Thyroid gland (tissue), 4 donors: ENCODE measurements at regions of chr1 and their contacts with region 1.

Region 1: GRCh38 chr1:239396995-239397394 is 10.6 kb downstream of the CHRM3 start:
- DNase-seq: no peak
- H3K4me3 ChIP-seq: no peak overlapping the region
- H3K27ac ChIP-seq: no peak overlapping the region
- H3K4me1 ChIP-seq: no peaks in the 10 kb centered on the region
- H3K27me3 ChIP-seq: no peaks in the 10 kb centered on the region
- CTCF ChIP-seq: no peak
- POLR2A ChIP-seq: no peak

Region 2: DNA sequence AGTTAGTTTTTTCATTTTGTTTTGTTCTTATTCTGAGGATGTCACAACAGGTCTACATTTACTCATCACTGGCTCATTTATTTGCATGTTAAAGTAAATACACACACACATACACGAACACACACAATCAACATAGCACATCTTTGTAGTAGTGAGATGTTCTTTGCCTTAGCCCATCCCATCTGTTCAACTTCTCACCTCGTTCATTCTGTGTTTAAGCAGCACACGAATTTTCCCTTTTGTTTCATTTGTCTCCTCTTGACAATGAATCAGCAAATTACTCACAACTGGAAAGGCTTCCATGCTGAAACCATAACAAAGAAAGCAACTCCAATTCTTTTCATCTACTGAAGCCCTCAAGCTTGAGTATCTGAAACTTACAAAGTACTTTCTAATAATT is 144.0 kb before region 1 on chr1:
- intact Hi-C with region 1: no loop called
- DNase-seq: no peak
- H3K4me3 ChIP-seq: no peak overlapping the region
- H3K27ac ChIP-seq: no peak overlapping the region
- H3K4me1 ChIP-seq: no peaks in the 10 kb centered on the region
- H3K27me3 ChIP-seq: no peaks in the 10 kb centered on the region
- CTCF ChIP-seq: no peak
- POLR2A ChIP-seq: no peak

Region 3: GRCh38 chr1:239558991-239559390 is 162.0 kb after region 1 on chr1:
- intact Hi-C with region 1: no loop called
- DNase-seq: no peak
- H3K4me3 ChIP-seq: no peak overlapping the region
- H3K27ac ChIP-seq: no peak overlapping the region
- H3K4me1 ChIP-seq: no peaks in the 10 kb centered on the region
- H3K27me3 ChIP-seq: no peaks in the 10 kb centered on the region
- CTCF ChIP-seq: no peak
- POLR2A ChIP-seq: no peak

Region 4: GRCh38 chr1:239898062-239898730 is 501.2 kb after region 1 on chr1:
- intact Hi-C with region 1: loop called (anchors 5 kb)
- DNase-seq: peak; percentile 78 to 80
- H3K4me3 ChIP-seq: no peak overlapping the region
- H3K27ac ChIP-seq: no peak overlapping the region
- H3K4me1 ChIP-seq: no peaks in the 10 kb centered on the region
- H3K27me3 ChIP-seq: no peaks in the 10 kb centered on the region
- CTCF ChIP-seq: peak; percentile 84 to 95 (median 88)
- POLR2A ChIP-seq: no peak